ENCODE measurements at regions of chr11 and their contacts with region 1.

Region 1: DNA sequence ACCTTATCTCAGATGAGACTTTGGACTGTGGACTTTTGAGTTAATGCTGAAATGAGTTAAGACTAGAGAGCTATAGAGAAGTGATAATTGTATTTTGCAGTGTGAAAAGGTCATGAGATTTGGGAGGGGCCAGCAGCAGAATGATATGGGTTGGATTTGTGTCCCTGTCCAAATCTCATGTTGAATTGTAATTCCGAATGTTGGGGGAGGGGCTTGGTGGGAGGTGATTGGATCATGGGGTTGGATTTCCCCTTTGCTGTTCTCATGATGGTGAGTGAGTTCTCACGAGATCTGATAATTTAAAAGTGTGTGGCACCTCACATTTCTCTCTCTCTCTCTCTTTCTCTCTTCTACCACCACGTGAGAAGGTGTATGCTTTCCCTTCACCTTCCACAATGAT is 777.8 kb upstream of the LUZP2 start:
- DNase-seq: no peak
- ATAC-seq: no peak
- H3K4me3 ChIP-seq: no peak overlapping the region
- H3K27ac ChIP-seq: no peak overlapping the region
- H3K4me1 ChIP-seq: no peaks in the 10 kb centered on the region
- H3K27me3 ChIP-seq: no peaks in the 10 kb centered on the region
- CTCF ChIP-seq: no peak
- POLR2A ChIP-seq: no peak

Region 2: DNA sequence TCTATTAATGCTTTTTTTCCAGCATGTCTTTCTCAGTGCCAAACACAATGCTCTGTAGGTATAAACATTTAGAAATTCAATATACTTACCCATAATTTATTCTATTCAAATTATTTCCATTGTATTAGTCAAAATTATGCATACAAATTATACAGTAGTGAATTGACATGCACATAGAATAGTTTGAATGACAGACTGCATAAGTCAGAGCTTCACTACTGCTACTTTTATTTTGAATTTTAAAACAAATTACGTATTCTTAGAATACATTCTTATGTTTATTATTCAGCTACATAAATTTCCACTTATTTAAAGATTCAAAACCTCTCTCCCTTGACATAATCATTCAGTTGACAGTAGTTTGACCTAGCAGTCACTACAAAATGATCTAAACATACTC is 50.7 kb before region 1 on chr11:
- intact Hi-C with region 1: loop called in 1 of 10 experiments (anchors 5 kb)
- DNase-seq: no peak
- ATAC-seq: no peak
- H3K4me3 ChIP-seq: no peak overlapping the region
- H3K27ac ChIP-seq: no peak overlapping the region
- H3K4me1 ChIP-seq: no peaks in the 10 kb centered on the region
- H3K27me3 ChIP-seq: no peaks in the 10 kb centered on the region
- CTCF ChIP-seq: no peak
- POLR2A ChIP-seq: no peak

Region 3: GRCh38 chr11:23944923-23945322 is 225.9 kb after region 1 on chr11:
- intact Hi-C with region 1: no loop called
- DNase-seq: peak in 3 of 5 donors; percentile 28 to 50 (median 30)
- ATAC-seq: peak in 1 of 4 donors; percentile 88
- H3K4me3 ChIP-seq: no peak overlapping the region
- H3K27ac ChIP-seq: no peak overlapping the region
- H3K4me1 ChIP-seq: peaks cover 0 to 4% (median 0%) of the 10 kb centered on the region in 12 donors
- H3K27me3 ChIP-seq: no peaks in the 10 kb centered on the region
- CTCF ChIP-seq: no peak
- POLR2A ChIP-seq: no peak

Measured in heart left ventricle (tissue), 16 donors.